ENCODE measurements at regions of chr22 and their contacts with region 1.

Region 1: DNA sequence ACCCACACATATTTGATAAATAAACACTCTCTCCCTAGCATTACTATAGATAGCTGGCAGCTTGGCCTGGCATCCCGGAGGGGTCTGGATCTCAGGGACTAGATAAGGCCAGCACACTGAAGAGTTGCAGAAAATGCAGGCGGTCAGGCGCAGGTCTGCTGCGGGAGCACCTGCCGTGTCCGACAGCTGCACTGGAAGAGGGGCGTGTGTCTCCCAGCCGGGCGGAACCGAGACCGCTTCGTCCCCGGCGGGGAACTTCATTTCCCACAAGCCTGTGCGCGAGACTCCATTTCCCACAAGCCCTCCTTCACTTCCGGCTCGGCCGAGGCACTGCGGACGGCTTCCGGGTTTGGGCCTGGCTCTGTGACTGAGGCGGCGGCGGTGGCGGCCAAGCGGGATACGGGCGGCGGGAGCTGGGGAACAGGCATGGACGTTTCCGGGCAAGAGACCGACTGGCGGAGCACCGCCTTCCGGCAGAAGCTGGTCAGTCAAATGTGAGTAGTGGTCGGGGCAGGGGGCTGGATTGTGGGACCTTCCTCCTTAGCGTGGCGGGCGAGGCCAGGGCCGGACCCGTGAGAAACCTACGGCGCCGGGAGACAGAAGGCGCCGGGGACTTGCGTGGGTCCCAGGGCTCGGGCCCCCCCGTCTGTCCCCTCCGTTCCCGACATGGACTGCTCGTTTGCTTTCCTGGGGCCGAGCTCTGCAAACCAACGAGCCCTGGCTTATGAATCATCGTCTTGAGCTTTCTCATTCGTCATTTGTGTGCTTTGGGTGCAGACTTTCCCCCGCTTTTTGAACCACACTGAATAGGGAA is at the start of gene MED15:
- DNase-seq: peak; percentile 89
- ATAC-seq: peak; percentile 85
- H3K4me3 Mint-ChIP-seq: peak within 1 kb of the TSS; percentile 97
- H3K27ac Mint-ChIP-seq: peak within 1 kb of the TSS; percentile 98
- H3K4me1 Mint-ChIP-seq: peaks cover 39% of the 10 kb centered on the region
- H3K27me3 Mint-ChIP-seq: no peaks in the 10 kb centered on the region
- total RNA-seq, gene MED15: 227 to 233 TPM

Region 2: DNA sequence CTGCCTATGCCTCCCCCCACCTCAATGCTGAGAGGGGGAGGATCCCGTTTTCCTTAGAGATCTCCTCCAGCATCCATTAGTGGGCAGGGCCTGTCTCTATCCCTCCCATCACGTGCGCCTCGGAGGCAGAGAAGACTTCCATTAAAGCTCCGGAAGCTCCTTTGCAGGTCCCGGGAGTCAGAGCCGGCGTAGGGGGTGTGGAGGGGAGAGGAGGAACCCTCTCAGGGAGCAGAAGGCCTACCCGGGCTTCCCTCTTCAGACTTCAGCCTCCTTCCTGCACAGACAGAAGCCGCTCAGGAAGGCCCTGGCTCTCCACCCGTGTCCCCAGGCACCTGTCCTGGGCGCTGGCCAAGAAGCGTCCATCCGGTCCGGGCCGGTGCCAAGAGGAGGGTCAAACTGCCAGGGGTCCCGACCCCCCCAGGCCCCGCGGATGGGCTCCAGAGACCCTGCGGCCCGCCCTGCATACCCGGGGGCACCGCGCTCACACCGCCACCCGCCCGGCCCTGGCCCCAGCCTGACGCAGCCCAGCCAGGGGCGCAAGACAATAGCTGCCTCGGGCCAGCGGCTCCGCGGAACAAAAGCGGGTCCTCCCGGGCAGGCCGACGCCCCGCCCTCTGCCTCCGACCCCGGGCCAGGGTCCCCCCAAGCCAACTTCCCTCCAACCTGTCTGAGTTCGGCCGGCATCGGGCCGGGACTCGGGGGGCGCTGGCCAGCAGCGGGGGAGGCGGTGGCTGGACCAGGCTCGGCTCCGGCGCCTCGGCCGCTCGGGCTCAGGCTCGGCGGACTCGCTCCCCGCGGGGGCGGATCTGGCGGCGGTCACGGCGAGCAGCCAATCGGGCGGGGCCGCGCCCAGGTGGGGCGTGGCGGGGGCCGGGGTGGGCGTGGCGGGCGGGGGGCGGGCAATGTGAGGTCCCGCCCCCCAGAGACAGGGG is 520.8 kb before region 1 on chr22:
- POLR2A ChIA-PET with region 1: no interaction called
- DNase-seq: peak; percentile 83
- ATAC-seq: peak; percentile 83
- H3K4me3 Mint-ChIP-seq: peak overlapping the region; percentile 28
- H3K27ac Mint-ChIP-seq: no peak overlapping the region
- H3K4me1 Mint-ChIP-seq: no peaks in the 10 kb centered on the region
- H3K27me3 Mint-ChIP-seq: peaks cover 4% of the 10 kb centered on the region

Region 3: DNA sequence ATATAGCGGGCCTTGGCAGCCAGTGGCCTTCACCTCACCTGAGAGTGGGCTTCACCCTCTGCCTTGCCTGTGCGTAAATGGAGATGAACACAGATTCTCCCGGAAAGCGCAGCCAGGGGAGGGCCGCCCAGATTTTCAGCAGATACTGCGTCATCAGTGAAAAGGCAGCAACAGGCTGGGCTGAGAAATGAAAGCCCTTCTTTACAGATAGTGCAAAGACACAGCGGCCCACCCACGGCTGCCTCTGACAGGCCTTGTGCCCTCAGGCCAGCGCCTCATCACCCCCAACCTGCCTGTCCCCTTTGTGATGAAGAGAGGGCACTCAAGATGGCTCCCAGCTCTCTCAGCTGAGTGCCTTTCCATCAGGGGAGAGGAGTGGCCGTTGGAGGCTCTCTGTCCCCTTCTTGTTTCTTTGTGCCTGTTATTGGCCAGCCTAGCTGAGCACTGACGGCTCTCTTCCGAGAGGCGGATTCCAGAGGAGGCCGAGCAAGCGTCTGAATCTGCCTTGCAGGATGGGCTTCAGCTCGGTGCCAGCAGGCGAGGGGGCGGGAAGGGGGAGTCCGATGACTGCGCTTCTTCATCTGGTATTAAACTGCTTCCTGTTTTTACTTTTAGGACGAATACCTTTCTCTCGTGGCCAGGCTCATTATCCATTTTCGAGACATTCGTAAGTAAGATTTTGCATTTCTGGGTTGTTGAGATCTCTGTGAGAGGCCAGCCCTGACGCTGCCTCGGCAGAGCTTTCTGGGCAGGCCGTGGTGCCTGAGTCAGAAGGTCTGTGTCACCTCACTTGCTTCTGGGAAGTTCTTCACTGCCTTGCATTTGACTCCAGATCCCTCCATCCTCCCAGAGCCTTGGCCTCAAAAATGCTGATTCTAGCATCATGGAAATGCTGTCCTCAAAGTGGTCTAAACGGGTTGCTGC is 43.6 kb after region 1 on chr22:
- POLR2A ChIA-PET with region 1: interaction called, 33 read pairs
- DNase-seq: peak; percentile 62
- ATAC-seq: peak; percentile 36
- H3K4me3 Mint-ChIP-seq: peak overlapping the region; percentile 88
- H3K27ac Mint-ChIP-seq: peak overlapping the region; percentile 100
- H3K4me1 Mint-ChIP-seq: peaks cover 56% of the 10 kb centered on the region
- H3K27me3 Mint-ChIP-seq: no peaks in the 10 kb centered on the region

Measured in activated naive CD8-positive, alpha-beta T cell treated with anti-CD3 and anti-CD28 coated beads, Interleukin-2, amount 10 ng/mL, durations not matched to agents 7 days and 5 days (primary cell).